PC-3 (cell line): ENCODE measurements at regions of chr4 and their contacts with region 1.

Region 1: GRCh38 chr4:53377319-53378170 is at the start of gene FIP1L1:
- DNase-seq: peak; percentile 98
- ATAC-seq: peak; percentile 94
- H3K4me3 ChIP-seq: peak within 1 kb of the TSS; percentile 87
- H3K27ac ChIP-seq: peak within 1 kb of the TSS; percentile 41
- H3K4me1 ChIP-seq: peaks cover 25% of the 10 kb centered on the region
- H3K27me3 ChIP-seq: no peaks in the 10 kb centered on the region
- CTCF ChIP-seq: no peak
- total RNA-seq, gene FIP1L1: 76.1 and 102 TPM in 2 replicates

Region 2: DNA sequence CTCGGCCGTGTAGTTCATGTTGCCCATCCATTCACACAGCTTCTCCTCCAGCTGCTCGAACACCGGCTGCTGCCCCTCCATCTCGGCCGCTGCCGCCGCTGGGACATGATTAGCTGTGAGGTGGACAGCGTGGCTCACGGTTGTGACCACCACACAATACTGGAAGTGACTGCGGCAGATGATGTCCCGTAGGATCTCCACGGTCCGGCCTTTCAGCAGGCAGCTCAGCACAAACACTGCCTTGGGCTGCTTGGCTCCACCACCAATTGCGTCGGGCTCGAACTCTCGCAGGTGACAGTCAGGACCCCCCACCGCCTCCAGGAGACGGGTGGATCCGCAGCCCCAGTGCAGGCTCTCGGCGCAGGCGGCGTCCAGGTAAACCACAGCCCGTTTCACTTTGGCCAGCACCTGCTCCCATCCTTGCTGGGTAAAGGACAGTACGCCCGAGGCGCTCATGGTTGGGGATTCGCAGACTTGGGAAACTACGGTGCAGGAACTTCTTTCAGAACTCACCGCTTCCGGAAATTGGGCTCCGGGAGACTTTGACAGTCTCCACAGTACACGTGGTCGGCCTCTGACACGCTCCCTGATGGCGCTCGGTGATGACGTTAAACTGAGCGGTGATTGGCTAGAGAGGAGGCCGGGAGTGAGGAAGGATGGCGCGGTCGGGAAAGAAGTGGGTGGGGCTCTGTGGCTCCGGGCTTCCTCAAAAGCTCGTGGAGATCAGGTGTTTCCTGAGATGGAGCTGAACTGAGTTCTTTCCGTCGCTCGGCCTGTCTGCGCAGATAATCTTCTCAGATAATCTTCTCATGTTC is 11.9 kb before region 1 on chr4 and contains the start of gene SCFD2:
- CTCF ChIA-PET with region 1: no interaction called
- POLR2A ChIA-PET with region 1: interaction called, 10 read pairs
- intact Hi-C with region 1: loop called (anchors 1 kb)
- DNase-seq: peak; percentile 100
- ATAC-seq: peak; percentile 92
- H3K4me3 ChIP-seq: peak within 1 kb of the TSS; percentile 95
- H3K27ac ChIP-seq: peak within 1 kb of the TSS; percentile 51
- H3K4me1 ChIP-seq: peaks cover 34% of the 10 kb centered on the region
- H3K27me3 ChIP-seq: no peaks in the 10 kb centered on the region
- CTCF ChIP-seq: no peak
- total RNA-seq, gene SCFD2: 36.6 and 40.7 TPM in 2 replicates

Region 3: GRCh38 chr4:53444954-53445353 is 67.4 kb after region 1 on chr4:
- CTCF ChIA-PET with region 1: no interaction called
- POLR2A ChIA-PET with region 1: no interaction called
- intact Hi-C with region 1: no loop called
- DNase-seq: no peak
- ATAC-seq: no peak
- H3K4me3 ChIP-seq: no peak overlapping the region
- H3K27ac ChIP-seq: no peak overlapping the region
- H3K4me1 ChIP-seq: no peaks in the 10 kb centered on the region
- H3K27me3 ChIP-seq: no peaks in the 10 kb centered on the region
- CTCF ChIP-seq: no peak

Region 4: DNA sequence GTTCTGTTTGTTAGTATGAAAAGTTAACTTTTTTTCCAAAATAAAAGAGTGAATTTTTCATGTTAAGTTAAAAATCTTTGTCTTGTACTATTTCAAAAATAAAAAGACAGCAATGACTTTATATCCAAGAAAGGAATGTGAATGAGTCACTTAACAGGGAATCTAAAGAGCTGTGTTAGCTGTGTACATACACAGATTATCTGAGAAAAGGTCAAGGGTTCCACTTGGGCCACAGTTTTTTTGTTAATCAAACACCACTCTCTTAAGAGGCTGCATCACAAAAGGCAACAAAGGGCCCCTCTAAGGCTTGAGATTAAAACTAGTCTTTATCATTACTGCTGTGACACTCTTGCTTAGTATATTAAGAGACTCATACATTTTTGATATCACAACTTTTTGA is 82.0 kb after region 1 on chr4:
- CTCF ChIA-PET with region 1: no interaction called
- POLR2A ChIA-PET with region 1: no interaction called
- intact Hi-C with region 1: loop called (anchors 5 kb)
- DNase-seq: peak; percentile 64
- ATAC-seq: peak; percentile 68
- H3K4me3 ChIP-seq: no peak overlapping the region
- H3K27ac ChIP-seq: peak overlapping the region; percentile 12
- H3K4me1 ChIP-seq: peaks cover 57% of the 10 kb centered on the region
- H3K27me3 ChIP-seq: no peaks in the 10 kb centered on the region
- CTCF ChIP-seq: no peak